ENCODE measurements at regions of chr3 and their contacts with region 1.

Region 1: DNA sequence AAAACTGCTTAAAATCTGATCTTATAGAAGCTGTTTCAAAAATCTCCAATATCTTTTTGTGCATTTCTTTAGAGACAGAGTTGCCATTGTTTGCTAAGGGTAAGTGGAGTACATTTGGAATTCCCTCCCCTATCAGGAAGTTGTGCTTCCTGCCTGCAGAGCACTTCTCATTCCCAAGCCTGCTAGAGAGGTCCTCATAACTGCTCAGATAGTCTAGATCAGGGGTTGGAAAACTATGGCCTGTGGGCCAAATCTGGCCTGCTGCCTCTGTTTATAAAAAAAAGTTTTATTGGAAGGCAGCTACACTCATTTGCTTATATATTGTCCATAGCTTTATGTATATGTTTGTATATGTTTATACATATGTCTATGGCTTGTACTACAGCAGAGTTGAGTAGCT is 333.7 kb upstream of the PROK2 start:
- DNase-seq: no peak
- ATAC-seq: no peak
- H3K4me3 ChIP-seq: no peak overlapping the region
- H3K4me3 Mint-ChIP-seq: no peak overlapping the region
- H3K27ac ChIP-seq: no peak overlapping the region
- H3K27ac Mint-ChIP-seq: no peak overlapping the region
- H3K4me1 ChIP-seq: no peaks in the 10 kb centered on the region
- H3K4me1 Mint-ChIP-seq: no peaks in the 10 kb centered on the region
- H3K27me3 ChIP-seq: no peaks in the 10 kb centered on the region
- H3K27me3 Mint-ChIP-seq: no peaks in the 10 kb centered on the region

Region 2: GRCh38 chr3:72068621-72069020 is 50.0 kb before region 1 on chr3:
- CTCF ChIA-PET with region 1: no interaction called
- POLR2A ChIA-PET with region 1: no interaction called
- DNase-seq: no peak
- ATAC-seq: no peak
- H3K4me3 ChIP-seq: no peak overlapping the region
- H3K4me3 Mint-ChIP-seq: no peak overlapping the region
- H3K27ac ChIP-seq: no peak overlapping the region
- H3K27ac Mint-ChIP-seq: no peak overlapping the region
- H3K4me1 ChIP-seq: no peaks in the 10 kb centered on the region
- H3K4me1 Mint-ChIP-seq: no peaks in the 10 kb centered on the region
- H3K27me3 ChIP-seq: peaks cover 0 to 3% of the 10 kb centered on the region in 2 experiments
- H3K27me3 Mint-ChIP-seq: peaks cover 0 to 4% of the 10 kb centered on the region in 2 donors

Region 3: GRCh38 chr3:72505539-72506405 is 387.1 kb after region 1 on chr3:
- CTCF ChIA-PET with region 1: no interaction called
- POLR2A ChIA-PET with region 1: interaction called in 1 of 2 experiments, 20 read pairs
- DNase-seq: no peak
- ATAC-seq: no peak
- H3K4me3 ChIP-seq: no peak overlapping the region
- H3K4me3 Mint-ChIP-seq: no peak overlapping the region
- H3K27ac ChIP-seq: no peak overlapping the region
- H3K27ac Mint-ChIP-seq: no peak overlapping the region
- H3K4me1 ChIP-seq: no peaks in the 10 kb centered on the region
- H3K4me1 Mint-ChIP-seq: no peaks in the 10 kb centered on the region
- H3K27me3 ChIP-seq: peaks cover 0 to 3% of the 10 kb centered on the region in 2 experiments
- H3K27me3 Mint-ChIP-seq: peaks cover 0 to 4% of the 10 kb centered on the region in 2 donors

Measured in T-cell (primary cell).